Testis (tissue), 5 donors: ENCODE measurements at regions of chr10 and their contacts with region 1.

Region 1: GRCh38 chr10:22003079-22003913 is at the start of gene DNAJC1:
- DNase-seq: peak; percentile 99
- H3K4me3 ChIP-seq: peak within 1 kb of the TSS; percentile 77 to 89
- H3K27ac ChIP-seq: peak within 1 kb of the TSS; percentile 90 to 94
- H3K4me1 ChIP-seq: peaks cover 10% of the 10 kb centered on the region
- H3K27me3 ChIP-seq: no peaks in the 10 kb centered on the region
- CTCF ChIP-seq: no peak
- POLR2A ChIP-seq: peak; percentile 82
- total RNA-seq, gene DNAJC1: 59.0 to 59.6 TPM

Region 2: GRCh38 chr10:21634599-21635365 is 368.5 kb before region 1 on chr10:
- intact Hi-C with region 1: no loop called
- DNase-seq: no peak
- H3K4me3 ChIP-seq: no peak overlapping the region
- H3K27ac ChIP-seq: no peak overlapping the region
- H3K4me1 ChIP-seq: no peaks in the 10 kb centered on the region
- H3K27me3 ChIP-seq: no peaks in the 10 kb centered on the region
- CTCF ChIP-seq: no peak
- POLR2A ChIP-seq: no peak

Region 3: DNA sequence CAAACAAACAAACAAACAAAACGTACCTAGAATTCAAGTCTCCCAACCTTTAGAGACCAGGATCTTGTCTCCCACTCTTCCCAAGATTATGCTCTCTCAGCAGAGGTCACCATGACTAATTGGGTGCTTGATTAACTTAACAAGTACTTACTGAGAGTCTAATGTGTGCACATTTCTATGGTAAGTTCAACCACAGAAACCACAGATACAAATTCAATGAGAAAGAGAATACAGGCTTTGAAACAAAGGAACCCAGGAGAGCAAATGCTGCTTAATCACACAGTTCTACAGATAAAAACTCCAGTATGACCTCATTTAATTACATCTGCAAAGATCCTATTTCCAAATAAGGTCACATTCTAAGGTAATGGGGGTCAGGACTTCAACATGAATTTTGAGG is 142.6 kb before region 1 on chr10:
- intact Hi-C with region 1: no loop called
- DNase-seq: no peak
- H3K4me3 ChIP-seq: no peak overlapping the region
- H3K27ac ChIP-seq: no peak overlapping the region
- H3K4me1 ChIP-seq: no peaks in the 10 kb centered on the region
- H3K27me3 ChIP-seq: no peaks in the 10 kb centered on the region
- CTCF ChIP-seq: no peak
- POLR2A ChIP-seq: no peak

Region 4: DNA sequence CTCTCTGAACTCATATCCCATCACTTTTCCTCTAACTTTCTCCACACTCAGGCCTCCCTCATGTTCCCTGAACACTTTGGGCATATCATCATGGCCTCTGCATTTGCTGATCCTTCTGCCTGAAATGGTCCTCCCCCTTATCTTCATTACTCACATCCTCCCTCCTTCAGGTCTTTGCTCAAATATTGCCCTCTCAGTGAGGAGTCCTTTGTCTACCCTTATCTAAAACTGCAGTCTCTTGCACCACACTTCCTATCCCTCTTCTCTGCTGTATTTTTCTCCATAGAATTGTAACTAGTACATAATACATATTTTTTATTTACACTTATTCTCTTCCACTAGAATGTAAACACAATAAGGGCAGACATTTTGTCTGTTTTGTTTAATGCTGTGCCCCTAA is 41.4 kb before region 1 on chr10:
- intact Hi-C with region 1: no loop called
- DNase-seq: no peak
- H3K4me3 ChIP-seq: no peak overlapping the region
- H3K27ac ChIP-seq: no peak overlapping the region
- H3K4me1 ChIP-seq: no peaks in the 10 kb centered on the region
- H3K27me3 ChIP-seq: no peaks in the 10 kb centered on the region
- CTCF ChIP-seq: no peak
- POLR2A ChIP-seq: no peak

Region 5: GRCh38 chr10:22097696-22098095 is 94.4 kb after region 1 on chr10:
- intact Hi-C with region 1: no loop called
- DNase-seq: no peak
- H3K4me3 ChIP-seq: no peak overlapping the region
- H3K27ac ChIP-seq: no peak overlapping the region
- H3K4me1 ChIP-seq: no peaks in the 10 kb centered on the region
- H3K27me3 ChIP-seq: no peaks in the 10 kb centered on the region
- CTCF ChIP-seq: no peak
- POLR2A ChIP-seq: no peak

Region 6: GRCh38 chr10:22988581-22989360 is 985.5 kb after region 1 on chr10:
- intact Hi-C with region 1: loop called (anchors 10 kb)
- DNase-seq: peak; percentile 69
- H3K4me3 ChIP-seq: no peak overlapping the region
- H3K27ac ChIP-seq: no peak overlapping the region
- H3K4me1 ChIP-seq: no peaks in the 10 kb centered on the region
- H3K27me3 ChIP-seq: no peaks in the 10 kb centered on the region
- CTCF ChIP-seq: peak; percentile 90 to 93 (median 91)
- POLR2A ChIP-seq: no peak